ENCODE measurements at regions of chr5 and their contacts with region 1.

Region 1: GRCh38 chr5:14108170-14108996 is 34.8 kb upstream of the TRIO start:
- DNase-seq: peak; percentile 91
- ATAC-seq: peak; percentile 78
- H3K4me3 ChIP-seq: peak overlapping the region; percentile 34
- H3K27ac ChIP-seq: peak overlapping the region; percentile 93
- H3K4me1 ChIP-seq: peaks cover 63% of the 10 kb centered on the region
- H3K27me3 ChIP-seq: no peaks in the 10 kb centered on the region
- CTCF ChIP-seq: peak; percentile 88

Region 2: GRCh38 chr5:13303467-13303866 is 804.9 kb before region 1 on chr5:
- CTCF ChIA-PET with region 1: no interaction called
- POLR2A ChIA-PET with region 1: no interaction called
- intact Hi-C with region 1: no loop called
- DNase-seq: no peak
- ATAC-seq: no peak
- H3K4me3 ChIP-seq: no peak overlapping the region
- H3K27ac ChIP-seq: no peak overlapping the region
- H3K4me1 ChIP-seq: no peaks in the 10 kb centered on the region
- H3K27me3 ChIP-seq: no peaks in the 10 kb centered on the region
- CTCF ChIP-seq: no peak

Region 3: GRCh38 chr5:13660072-13660471 is 448.3 kb before region 1 on chr5:
- CTCF ChIA-PET with region 1: no interaction called
- POLR2A ChIA-PET with region 1: no interaction called
- intact Hi-C with region 1: no loop called
- DNase-seq: peak; percentile 53
- ATAC-seq: no peak
- H3K4me3 ChIP-seq: no peak overlapping the region
- H3K27ac ChIP-seq: no peak overlapping the region
- H3K4me1 ChIP-seq: peaks cover 19% of the 10 kb centered on the region
- H3K27me3 ChIP-seq: no peaks in the 10 kb centered on the region
- CTCF ChIP-seq: peak; percentile 57

Region 4: GRCh38 chr5:13987843-13988464 is 120.4 kb before region 1 on chr5:
- CTCF ChIA-PET with region 1: no interaction called
- POLR2A ChIA-PET with region 1: no interaction called
- intact Hi-C with region 1: loop called (anchors 5 kb)
- DNase-seq: peak; percentile 95
- ATAC-seq: peak; percentile 41
- H3K4me3 ChIP-seq: no peak overlapping the region
- H3K27ac ChIP-seq: peak overlapping the region; percentile 55
- H3K4me1 ChIP-seq: peaks cover 35% of the 10 kb centered on the region
- H3K27me3 ChIP-seq: no peaks in the 10 kb centered on the region
- CTCF ChIP-seq: peak; percentile 98

Region 5: GRCh38 chr5:14011089-14012004 is 97.0 kb before region 1 on chr5:
- CTCF ChIA-PET with region 1: no interaction called
- POLR2A ChIA-PET with region 1: no interaction called
- intact Hi-C with region 1: loop called (anchors 2 kb)
- DNase-seq: peak; percentile 95
- ATAC-seq: peak; percentile 72
- H3K4me3 ChIP-seq: peak overlapping the region; percentile 75
- H3K27ac ChIP-seq: peak overlapping the region; percentile 96
- H3K4me1 ChIP-seq: peaks cover 39% of the 10 kb centered on the region
- H3K27me3 ChIP-seq: no peaks in the 10 kb centered on the region
- CTCF ChIP-seq: no peak

Region 6: GRCh38 chr5:14063138-14063537 is 45.2 kb before region 1 on chr5:
- CTCF ChIA-PET with region 1: no interaction called
- POLR2A ChIA-PET with region 1: no interaction called
- intact Hi-C with region 1: no loop called
- DNase-seq: no peak
- ATAC-seq: no peak
- H3K4me3 ChIP-seq: no peak overlapping the region
- H3K27ac ChIP-seq: no peak overlapping the region
- H3K4me1 ChIP-seq: 0 out of 2 replicates have a peak, but pooled peaks cover 3% of the 10 kb centered on the region
- H3K27me3 ChIP-seq: no peaks in the 10 kb centered on the region
- CTCF ChIP-seq: no peak

Region 7: GRCh38 chr5:14190194-14191164 is 82.1 kb after region 1 on chr5:
- CTCF ChIA-PET with region 1: no interaction called
- POLR2A ChIA-PET with region 1: no interaction called
- intact Hi-C with region 1: loop called (anchors 5 kb)
- DNase-seq: peak; percentile 99
- ATAC-seq: peak; percentile 84
- H3K4me3 ChIP-seq: peak overlapping the region; percentile 47
- H3K27ac ChIP-seq: peak overlapping the region; percentile 94
- H3K4me1 ChIP-seq: peaks cover 83% of the 10 kb centered on the region
- H3K27me3 ChIP-seq: no peaks in the 10 kb centered on the region
- CTCF ChIP-seq: no peak